Posterior cingulate gyrus (tissue), 11 donors: ENCODE measurements at regions of chr16 and their contacts with region 1.

Region 1: GRCh38 chr16:58755989-58756649 is 22.0 kb upstream of the GOT2 start:
- DNase-seq: peak; percentile 63 to 96 (median 81)

Region 2: DNA sequence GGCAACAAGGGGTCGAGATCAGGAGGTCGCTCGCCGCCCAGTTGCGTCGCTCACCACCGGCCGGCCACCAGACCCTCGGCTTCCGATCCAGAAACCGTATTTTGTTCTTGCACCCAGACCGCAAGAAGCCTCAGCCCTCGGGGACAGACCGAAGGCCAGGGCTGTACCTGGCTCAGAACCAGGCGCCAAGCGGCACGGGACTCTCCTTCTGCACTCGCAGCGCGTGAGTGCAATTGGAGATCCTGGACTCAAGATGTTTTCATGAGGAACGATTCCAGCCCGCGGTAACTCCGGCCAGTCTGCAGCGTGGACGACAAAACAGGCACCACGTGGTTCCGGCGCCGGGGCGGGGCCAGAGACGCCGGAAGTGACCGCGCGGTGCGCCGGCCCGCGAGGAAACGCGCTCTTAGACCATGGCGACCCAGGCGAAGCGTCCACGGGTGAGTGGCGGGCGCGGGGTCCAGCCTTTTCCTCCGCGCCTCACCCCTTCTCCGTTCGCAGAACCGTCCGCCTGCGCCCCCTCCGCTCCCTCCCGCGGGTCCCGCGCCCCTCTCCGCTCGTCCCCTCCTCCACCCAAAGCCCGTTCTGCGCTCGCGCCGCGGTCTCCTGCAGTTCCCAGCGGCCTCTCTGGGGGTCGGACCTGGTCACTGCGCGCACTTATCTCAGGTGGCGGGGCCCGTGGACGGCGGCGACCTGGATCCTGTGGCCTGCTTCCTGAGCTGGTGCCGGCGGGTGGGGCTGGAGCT is 240.8 kb before region 1 on chr16 and contains the start of gene SETD6:
- intact Hi-C with region 1: loop called (anchors 5 kb)
- DNase-seq: peak; percentile 87 to 98 (median 92)

Region 3: GRCh38 chr16:58678716-58679115 is 77.4 kb before region 1 on chr16:
- intact Hi-C with region 1: loop called (anchors 1 kb)
- DNase-seq: peak; percentile 39 to 96 (median 67)